Esophagus muscularis mucosa (tissue), 4 donors: ENCODE measurements at regions of chr10 and their contacts with region 1.

Region 1: DNA sequence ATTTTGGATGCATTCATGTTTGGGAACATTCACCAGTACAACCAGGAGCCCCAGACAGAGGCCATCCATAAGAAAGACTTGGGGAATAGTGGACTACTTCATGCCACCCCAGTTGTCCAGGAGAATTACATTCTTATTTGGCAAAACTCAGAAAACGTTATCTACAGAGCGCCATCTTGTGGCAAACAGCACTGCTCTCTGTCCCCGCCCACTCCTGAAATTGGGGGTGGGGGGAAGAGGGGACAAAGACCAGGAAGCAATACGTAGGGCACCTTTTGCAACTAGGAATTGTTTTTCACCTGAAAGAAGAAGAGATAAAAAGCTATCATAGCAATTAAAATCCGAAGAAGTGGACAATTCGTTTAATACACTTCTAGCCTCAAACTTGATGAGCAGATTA is 134.6 kb upstream of the MGMT start:
- DNase-seq: peak; percentile 19
- H3K4me3 ChIP-seq: no peak overlapping the region
- H3K27ac ChIP-seq: no peak overlapping the region
- H3K4me1 ChIP-seq: no peaks in the 10 kb centered on the region
- H3K27me3 ChIP-seq: peaks cover 0 to 39% (median 2%) of the 10 kb centered on the region in 4 donors
- CTCF ChIP-seq: peak in 1 of 3 experiments; percentile 30
- EP300 ChIP-seq: no peak
- POLR2A ChIP-seq: no peak

Region 2: GRCh38 chr10:129030996-129031843 is 301.3 kb before region 1 on chr10:
- intact Hi-C with region 1: loop called (anchors 5 kb)
- DNase-seq: no peak
- H3K4me3 ChIP-seq: no peak overlapping the region
- H3K27ac ChIP-seq: no peak overlapping the region
- H3K4me1 ChIP-seq: peaks cover 0 to 6% (median 5%) of the 10 kb centered on the region in 4 donors
- H3K27me3 ChIP-seq: peaks cover 0 to 80% (median 7%) of the 10 kb centered on the region in 4 donors
- CTCF ChIP-seq: peak; percentile 81 to 90 (median 89)
- EP300 ChIP-seq: no peak
- POLR2A ChIP-seq: no peak